GM12878 (cell line): ENCODE measurements at regions of chr7 and their contacts with region 1.

Region 1: GRCh38 chr7:79749856-79750255 is 296.4 kb upstream of the MAGI2 start:
- DNase-seq: no peak
- ATAC-seq: no peak
- H3K4me3 ChIP-seq: no peak overlapping the region
- H3K27ac ChIP-seq: no peak overlapping the region
- H3K4me1 ChIP-seq: no peaks in the 10 kb centered on the region
- H3K27me3 ChIP-seq: no peaks in the 10 kb centered on the region
- CTCF ChIP-seq: no peak
- EP300 ChIP-seq: no peak
- POLR2A ChIP-seq: no peak
- RAD21 ChIP-seq: no peak

Region 2: DNA sequence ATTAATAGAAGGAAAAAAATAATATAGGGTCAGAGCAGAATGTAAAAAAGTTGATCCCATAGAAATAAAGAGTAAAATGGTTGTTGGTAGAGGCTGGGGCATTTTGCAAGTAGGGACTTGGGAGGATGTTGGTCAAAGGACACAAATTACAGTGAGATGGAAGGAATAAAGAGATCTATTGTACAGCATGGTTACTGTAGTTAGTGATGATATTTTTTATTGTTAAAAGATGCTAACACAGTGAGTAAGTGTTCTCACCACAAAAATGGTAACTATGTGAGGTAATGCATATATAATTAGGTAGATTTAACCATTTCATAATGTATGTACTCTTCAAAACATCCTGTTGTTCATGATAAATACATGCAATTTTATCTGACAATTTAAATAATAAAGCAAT is 15.7 kb before region 1 on chr7:
- CTCF ChIA-PET with region 1: no interaction called
- POLR2A ChIA-PET with region 1: no interaction called
- RAD21 ChIA-PET with region 1: no interaction called
- SMC1A ChIA-PET with region 1: no interaction called
- in situ Hi-C with region 1: no loop called
- intact Hi-C with region 1: no loop called
- DNase-seq: no peak
- ATAC-seq: no peak
- H3K4me3 ChIP-seq: no peak overlapping the region
- H3K27ac ChIP-seq: no peak overlapping the region
- H3K4me1 ChIP-seq: no peaks in the 10 kb centered on the region
- H3K27me3 ChIP-seq: no peaks in the 10 kb centered on the region
- CTCF ChIP-seq: no peak
- EP300 ChIP-seq: no peak
- POLR2A ChIP-seq: no peak
- RAD21 ChIP-seq: no peak

Region 3: DNA sequence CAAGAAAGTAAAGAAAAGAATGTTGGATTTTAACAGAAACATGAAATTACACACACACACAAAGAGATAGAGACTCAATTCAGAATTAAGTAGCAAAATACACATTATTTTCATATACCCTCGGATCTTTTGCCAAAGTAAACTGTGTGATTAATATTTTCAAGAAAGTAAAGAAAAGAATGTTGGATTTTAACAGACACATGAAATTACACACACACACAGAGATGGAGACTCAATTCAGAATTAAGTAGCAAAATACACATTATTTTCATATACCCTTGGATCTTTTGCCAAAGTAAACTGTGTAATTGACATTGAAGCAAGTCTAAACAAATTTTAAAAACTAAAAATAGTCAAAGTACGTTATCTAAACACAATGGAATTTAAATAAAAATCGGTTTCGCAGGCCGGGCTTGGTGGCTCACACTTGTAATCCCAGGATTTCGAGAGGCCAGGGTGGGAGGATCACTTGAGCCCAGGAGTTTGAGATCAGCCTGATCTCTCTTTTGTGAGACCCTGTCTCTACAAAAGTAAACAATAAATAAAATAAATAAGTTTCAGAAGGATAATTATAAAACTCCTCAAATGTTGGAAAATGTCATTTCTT is 40.9 kb after region 1 on chr7:
- CTCF ChIA-PET with region 1: no interaction called
- POLR2A ChIA-PET with region 1: no interaction called
- RAD21 ChIA-PET with region 1: no interaction called
- SMC1A ChIA-PET with region 1: no interaction called
- in situ Hi-C with region 1: no loop called
- intact Hi-C with region 1: loop called (anchors 5 kb)
- DNase-seq: no peak
- ATAC-seq: no peak
- H3K4me3 ChIP-seq: no peak overlapping the region
- H3K27ac ChIP-seq: no peak overlapping the region
- H3K4me1 ChIP-seq: no peaks in the 10 kb centered on the region
- H3K27me3 ChIP-seq: no peaks in the 10 kb centered on the region
- CTCF ChIP-seq: no peak
- EP300 ChIP-seq: no peak
- POLR2A ChIP-seq: no peak
- RAD21 ChIP-seq: no peak